Prostate gland (tissue), 2 donors: ENCODE measurements at regions of chr10 and their contacts with region 1.

Region 1: DNA sequence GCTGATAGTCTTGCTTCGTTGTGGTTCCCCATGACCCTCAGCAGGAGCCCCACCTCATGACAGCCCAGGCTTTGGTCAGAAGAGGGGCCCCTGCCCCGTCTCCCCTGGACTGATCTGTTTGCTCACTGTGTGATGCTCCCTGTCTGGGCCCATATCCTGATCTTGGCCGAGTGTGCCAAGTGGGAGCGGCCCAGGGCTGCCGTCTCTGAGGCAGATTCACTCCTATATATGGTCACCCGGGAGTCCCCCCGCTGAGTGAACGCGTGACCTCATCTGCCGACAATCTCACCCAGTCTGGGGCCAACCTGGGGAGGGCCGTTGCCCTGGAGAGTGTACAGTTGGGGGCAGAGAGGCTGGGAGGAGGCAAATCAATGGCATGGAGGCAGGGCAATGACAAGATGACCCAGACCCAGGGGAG is 34.5 kb downstream of the PPIF start:
- DNase-seq: peak; percentile 28
- H3K4me3 ChIP-seq: no peak overlapping the region
- H3K27ac ChIP-seq: peak overlapping the region; percentile 67 to 73
- H3K4me1 ChIP-seq: peaks cover 14% of the 10 kb centered on the region
- H3K27me3 ChIP-seq: no peaks in the 10 kb centered on the region
- CTCF ChIP-seq: no peak
- POLR2A ChIP-seq: no peak

Region 2: DNA sequence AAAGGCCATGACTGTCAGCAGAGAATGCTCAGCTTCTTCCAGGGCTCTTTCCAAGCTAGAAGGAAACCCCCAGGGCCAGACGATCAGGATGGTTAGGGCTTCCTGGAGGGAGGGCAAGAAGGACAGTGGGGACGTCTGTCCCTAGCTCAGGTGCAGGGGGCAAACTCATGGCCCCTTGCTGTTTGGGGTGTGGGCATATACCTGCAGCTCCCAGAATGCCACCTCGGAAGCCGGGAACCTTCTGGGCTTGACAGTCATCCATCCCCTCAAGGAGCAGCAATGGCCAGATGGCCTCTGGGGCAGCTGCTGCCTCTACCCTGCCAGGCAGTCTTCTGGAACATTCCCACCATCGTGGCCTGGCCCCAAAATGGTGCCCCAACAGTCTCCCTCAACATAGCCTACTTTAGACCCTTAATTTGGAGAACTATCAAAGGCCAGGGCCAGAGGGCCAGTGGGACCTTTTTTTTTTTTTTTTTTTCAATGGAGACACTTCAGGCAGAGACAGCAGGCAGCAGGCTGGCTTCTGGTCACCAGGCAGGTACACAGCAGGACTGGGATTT is 353.3 kb before region 1 on chr10:
- intact Hi-C with region 1: no loop called
- DNase-seq: no peak
- H3K4me3 ChIP-seq: no peak overlapping the region
- H3K27ac ChIP-seq: no peak overlapping the region
- H3K4me1 ChIP-seq: no peaks in the 10 kb centered on the region
- H3K27me3 ChIP-seq: no peaks in the 10 kb centered on the region
- CTCF ChIP-seq: no peak
- POLR2A ChIP-seq: no peak

Region 3: DNA sequence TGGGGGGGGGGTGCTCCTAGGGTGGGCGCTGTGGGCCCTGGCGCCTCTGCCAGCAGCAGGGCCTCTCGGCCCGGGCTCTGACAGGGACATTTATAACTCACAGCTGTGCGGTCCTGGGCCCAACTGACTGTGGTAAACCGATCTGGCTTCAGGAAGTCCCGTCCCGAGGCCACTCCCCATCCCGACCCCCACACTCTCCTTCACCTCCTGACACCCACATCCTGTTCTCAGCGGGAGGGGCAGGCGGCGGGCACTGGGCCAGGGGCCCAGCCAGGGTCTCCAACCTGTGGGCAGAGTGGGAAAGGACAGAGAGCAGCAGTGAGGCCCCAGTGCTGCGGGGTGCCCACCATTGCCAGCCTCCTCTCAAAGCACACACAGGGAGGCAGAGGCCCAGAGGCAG is 244.0 kb before region 1 on chr10:
- intact Hi-C with region 1: no loop called
- DNase-seq: no peak
- H3K4me3 ChIP-seq: no peak overlapping the region
- H3K27ac ChIP-seq: peak overlapping the region; percentile 63 to 66
- H3K4me1 ChIP-seq: peaks cover 5% of the 10 kb centered on the region
- H3K27me3 ChIP-seq: no peaks in the 10 kb centered on the region
- CTCF ChIP-seq: no peak
- POLR2A ChIP-seq: no peak

Region 4: GRCh38 chr10:79316671-79317431 is 65.0 kb before region 1 on chr10:
- intact Hi-C with region 1: no loop called
- DNase-seq: no peak
- H3K4me3 ChIP-seq: no peak overlapping the region
- H3K27ac ChIP-seq: no peak overlapping the region
- H3K4me1 ChIP-seq: no peaks in the 10 kb centered on the region
- H3K27me3 ChIP-seq: no peaks in the 10 kb centered on the region
- CTCF ChIP-seq: no peak
- POLR2A ChIP-seq: no peak

Region 5: DNA sequence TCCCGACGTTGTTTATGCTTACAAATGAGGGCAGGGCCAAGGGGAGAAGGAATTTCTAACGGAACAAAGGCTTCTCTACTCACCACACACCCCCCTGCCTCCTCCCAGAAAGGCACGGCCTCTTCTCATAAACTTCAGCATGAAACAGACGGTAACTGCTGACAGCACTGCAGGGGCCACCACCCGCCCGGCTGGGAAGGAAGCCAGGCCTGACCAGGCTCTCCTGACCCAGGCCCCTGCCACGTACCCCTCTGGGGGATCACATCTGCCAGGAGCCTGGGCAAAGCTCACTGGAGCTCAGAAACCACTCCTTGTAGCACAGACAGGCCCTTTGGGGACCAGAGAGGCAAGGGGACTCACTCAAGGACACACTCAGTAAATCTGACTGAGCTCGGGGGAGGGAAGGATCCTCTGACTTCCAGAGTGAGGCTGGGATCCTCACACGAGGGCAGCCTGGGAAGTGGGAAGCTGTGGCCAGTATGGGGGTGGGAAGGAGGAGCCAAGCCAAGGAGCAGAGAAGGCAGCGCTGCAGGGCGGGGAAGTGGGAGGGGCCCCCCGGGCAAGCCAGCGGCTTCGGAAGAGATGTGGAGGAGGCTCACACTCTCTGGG is 17.5 kb after region 1 on chr10:
- intact Hi-C with region 1: loop called (anchors 2 kb)
- DNase-seq: peak; percentile 68
- H3K4me3 ChIP-seq: no peak overlapping the region
- H3K27ac ChIP-seq: peak overlapping the region; percentile 80 to 88
- H3K4me1 ChIP-seq: peaks cover 35% of the 10 kb centered on the region
- H3K27me3 ChIP-seq: no peaks in the 10 kb centered on the region
- CTCF ChIP-seq: no peak
- POLR2A ChIP-seq: no peak

Region 6: GRCh38 chr10:79445141-79445976 is 63.5 kb after region 1 on chr10 and contains the start of gene ZCCHC24:
- intact Hi-C with region 1: loop called (anchors 5 kb)
- DNase-seq: peak; percentile 97
- H3K4me3 ChIP-seq: peak within 1 kb of the TSS; percentile 84 to 89
- H3K27ac ChIP-seq: peak within 1 kb of the TSS; percentile 75 to 87
- H3K4me1 ChIP-seq: peaks cover 2% of the 10 kb centered on the region
- H3K27me3 ChIP-seq: no peaks in the 10 kb centered on the region
- CTCF ChIP-seq: peak in 1 of 4 experiments; percentile 13
- POLR2A ChIP-seq: peak; percentile 23
- total RNA-seq, gene ZCCHC24: 20.8 to 51.2 TPM

Region 7: GRCh38 chr10:79463578-79464496 is 82.0 kb after region 1 on chr10:
- intact Hi-C with region 1: loop called (anchors 2 kb)
- DNase-seq: no peak
- H3K4me3 ChIP-seq: no peak overlapping the region
- H3K27ac ChIP-seq: no peak overlapping the region
- H3K4me1 ChIP-seq: no peaks in the 10 kb centered on the region
- H3K27me3 ChIP-seq: no peaks in the 10 kb centered on the region
- CTCF ChIP-seq: no peak
- POLR2A ChIP-seq: no peak